CD4-positive, alpha-beta T cell (primary cell): ENCODE measurements at regions of chr11 and their contacts with region 1.

Region 1: GRCh38 chr11:61384271-61385242 is 7.8 kb upstream of the TMEM216 start:
- DNase-seq: no peak
- ATAC-seq: no peak
- H3K4me3 ChIP-seq: no peak overlapping the region
- H3K4me3 Mint-ChIP-seq: no peak overlapping the region
- H3K27ac ChIP-seq: no peak overlapping the region
- H3K27ac Mint-ChIP-seq: no peak overlapping the region
- H3K4me1 ChIP-seq: peaks cover 6% of the 10 kb centered on the region
- H3K4me1 Mint-ChIP-seq: peaks cover 7% of the 10 kb centered on the region
- H3K27me3 ChIP-seq: no peaks in the 10 kb centered on the region
- H3K27me3 Mint-ChIP-seq: no peaks in the 10 kb centered on the region
- CTCF ChIP-seq: no peak

Region 2: DNA sequence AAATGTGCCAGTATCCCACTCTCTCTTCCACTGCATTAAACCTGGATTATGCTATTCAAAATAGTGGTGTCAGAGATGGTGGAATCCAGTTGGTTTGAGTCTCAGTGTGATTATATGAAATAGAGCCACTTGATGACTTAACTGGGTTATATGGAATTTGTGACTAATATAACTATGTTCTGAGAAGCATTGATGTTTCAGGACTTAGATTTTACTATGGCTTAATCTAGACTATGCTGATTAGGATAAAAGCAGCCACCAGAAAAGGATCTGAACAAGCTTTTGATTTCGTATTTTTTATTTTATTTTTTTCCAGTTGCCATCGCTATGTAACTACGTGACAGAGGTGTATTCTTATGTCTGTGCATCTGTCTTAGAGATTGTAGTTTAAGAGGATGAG is 1240.8 kb before region 1 on chr11:
- CTCF ChIA-PET with region 1: no interaction called
- POLR2A ChIA-PET with region 1: no interaction called
- intact Hi-C with region 1: no loop called
- DNase-seq: no peak
- ATAC-seq: peak; percentile 46
- H3K4me3 ChIP-seq: no peak overlapping the region
- H3K4me3 Mint-ChIP-seq: no peak overlapping the region
- H3K27ac ChIP-seq: no peak overlapping the region
- H3K27ac Mint-ChIP-seq: no peak overlapping the region
- H3K4me1 ChIP-seq: no peaks in the 10 kb centered on the region
- H3K4me1 Mint-ChIP-seq: peaks cover 10% of the 10 kb centered on the region
- H3K27me3 ChIP-seq: no peaks in the 10 kb centered on the region
- H3K27me3 Mint-ChIP-seq: no peaks in the 10 kb centered on the region
- CTCF ChIP-seq: no peak

Region 3: GRCh38 chr11:61254403-61255025 is 130.0 kb before region 1 on chr11:
- CTCF ChIA-PET with region 1: interaction called, 5 read pairs
- POLR2A ChIA-PET with region 1: no interaction called
- intact Hi-C with region 1: loop called in 1 of 2 experiments (anchors 1 kb)
- DNase-seq: peak; percentile 32 to 74 (median 44)
- ATAC-seq: peak; percentile 77
- H3K4me3 ChIP-seq: no peak overlapping the region
- H3K4me3 Mint-ChIP-seq: no peak overlapping the region
- H3K27ac ChIP-seq: no peak overlapping the region
- H3K27ac Mint-ChIP-seq: no peak overlapping the region
- H3K4me1 ChIP-seq: peaks cover 3% of the 10 kb centered on the region
- H3K4me1 Mint-ChIP-seq: no peaks in the 10 kb centered on the region
- H3K27me3 ChIP-seq: no peaks in the 10 kb centered on the region
- H3K27me3 Mint-ChIP-seq: no peaks in the 10 kb centered on the region
- CTCF ChIP-seq: peak; percentile 70

Region 4: DNA sequence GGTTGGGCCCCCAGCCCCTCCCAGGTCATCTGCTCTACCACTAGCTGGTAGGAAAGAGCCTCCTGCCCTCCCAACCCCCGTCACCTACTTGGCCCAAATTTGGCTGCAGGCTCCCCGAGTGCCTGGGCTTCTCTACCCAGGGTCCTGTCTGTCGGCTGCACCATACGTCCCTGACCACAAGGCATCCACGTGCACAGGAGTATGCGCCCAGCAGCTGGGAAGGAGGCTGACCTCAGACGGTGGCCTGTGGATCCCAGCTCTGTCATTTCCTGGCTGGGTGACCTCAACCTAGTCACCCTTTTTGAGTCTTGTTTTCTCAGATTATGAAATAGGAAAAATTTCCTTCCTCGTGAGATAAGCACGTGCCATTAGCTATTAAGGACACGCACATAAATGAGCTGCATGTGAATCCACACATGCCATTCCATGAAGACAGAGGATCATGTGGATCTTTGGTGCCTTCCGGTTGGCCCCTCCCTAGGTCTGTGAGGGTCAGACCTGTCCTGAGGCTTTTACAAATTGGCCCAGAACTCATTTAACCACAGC is 36.6 kb before region 1 on chr11:
- CTCF ChIA-PET with region 1: no interaction called
- POLR2A ChIA-PET with region 1: no interaction called
- intact Hi-C with region 1: no loop called
- DNase-seq: peak in 3 of 14 experiments; percentile 21 to 74 (median 60)
- ATAC-seq: no peak
- H3K4me3 ChIP-seq: no peak overlapping the region
- H3K4me3 Mint-ChIP-seq: no peak overlapping the region
- H3K27ac ChIP-seq: no peak overlapping the region
- H3K27ac Mint-ChIP-seq: no peak overlapping the region
- H3K4me1 ChIP-seq: no peaks in the 10 kb centered on the region
- H3K4me1 Mint-ChIP-seq: no peaks in the 10 kb centered on the region
- H3K27me3 ChIP-seq: no peaks in the 10 kb centered on the region
- H3K27me3 Mint-ChIP-seq: no peaks in the 10 kb centered on the region
- CTCF ChIP-seq: no peak

Region 5: GRCh38 chr11:61361686-61362541 is 22.6 kb before region 1 on chr11 and contains the starts of genes CYB561A3 and TMEM138:
- CTCF ChIA-PET with region 1: interaction called, 29 read pairs
- POLR2A ChIA-PET with region 1: interaction called, 26 read pairs
- intact Hi-C with region 1: no loop called
- DNase-seq: peak; percentile 75 to 94 (median 82)
- ATAC-seq: peak; percentile 84
- H3K4me3 ChIP-seq: peak within 1 kb of the TSS; percentile 99
- H3K4me3 Mint-ChIP-seq: peak within 1 kb of the TSS; percentile 99
- H3K27ac ChIP-seq: peak within 1 kb of the TSS; percentile 95 to 100
- H3K27ac Mint-ChIP-seq: peak within 1 kb of the TSS; percentile 100
- H3K4me1 ChIP-seq: peaks cover 35% of the 10 kb centered on the region
- H3K4me1 Mint-ChIP-seq: peaks cover 36% of the 10 kb centered on the region
- H3K27me3 ChIP-seq: no peaks in the 10 kb centered on the region
- H3K27me3 Mint-ChIP-seq: no peaks in the 10 kb centered on the region
- CTCF ChIP-seq: no peak
- total RNA-seq, gene CYB561A3: 24.4 to 25.8 TPM
- total RNA-seq, gene TMEM138: 59.2 to 60.9 TPM

Region 6: GRCh38 chr11:61367406-61367805 is 17.2 kb before region 1 on chr11:
- CTCF ChIA-PET with region 1: interaction called, 29 read pairs
- POLR2A ChIA-PET with region 1: interaction called, 26 read pairs
- intact Hi-C with region 1: no loop called
- DNase-seq: no peak
- ATAC-seq: no peak
- H3K4me3 ChIP-seq: no peak overlapping the region
- H3K4me3 Mint-ChIP-seq: no peak overlapping the region
- H3K27ac ChIP-seq: no peak overlapping the region
- H3K27ac Mint-ChIP-seq: no peak overlapping the region
- H3K4me1 ChIP-seq: peaks cover 13% of the 10 kb centered on the region
- H3K4me1 Mint-ChIP-seq: peaks cover 15% of the 10 kb centered on the region
- H3K27me3 ChIP-seq: no peaks in the 10 kb centered on the region
- H3K27me3 Mint-ChIP-seq: no peaks in the 10 kb centered on the region
- CTCF ChIP-seq: no peak

Region 7: GRCh38 chr11:61401558-61401957 is 17.0 kb after region 1 on chr11:
- CTCF ChIA-PET with region 1: interaction called, 13 read pairs
- POLR2A ChIA-PET with region 1: no interaction called
- intact Hi-C with region 1: no loop called
- DNase-seq: no peak
- ATAC-seq: no peak
- H3K4me3 ChIP-seq: no peak overlapping the region
- H3K4me3 Mint-ChIP-seq: no peak overlapping the region
- H3K27ac ChIP-seq: no peak overlapping the region
- H3K27ac Mint-ChIP-seq: peak overlapping the region; percentile 79
- H3K4me1 ChIP-seq: no peaks in the 10 kb centered on the region
- H3K4me1 Mint-ChIP-seq: no peaks in the 10 kb centered on the region
- H3K27me3 ChIP-seq: no peaks in the 10 kb centered on the region
- H3K27me3 Mint-ChIP-seq: no peaks in the 10 kb centered on the region
- CTCF ChIP-seq: no peak